ENCODE measurements at regions of chr2 and their contacts with region 1.

Region 1: GRCh38 chr2:104944495-104944894 is 90.6 kb downstream of the POU3F3 start:
- DNase-seq: no peak
- ATAC-seq: no peak
- H3K4me3 ChIP-seq: no peak overlapping the region
- H3K27ac ChIP-seq: no peak overlapping the region
- H3K4me1 ChIP-seq: no peaks in the 10 kb centered on the region
- H3K27me3 ChIP-seq: peaks cover 0 to 52% (median 22%) of the 10 kb centered on the region in 7 donors
- CTCF ChIP-seq: peak in 7 of 9 donors; percentile 14 to 50 (median 22)

Region 2: DNA sequence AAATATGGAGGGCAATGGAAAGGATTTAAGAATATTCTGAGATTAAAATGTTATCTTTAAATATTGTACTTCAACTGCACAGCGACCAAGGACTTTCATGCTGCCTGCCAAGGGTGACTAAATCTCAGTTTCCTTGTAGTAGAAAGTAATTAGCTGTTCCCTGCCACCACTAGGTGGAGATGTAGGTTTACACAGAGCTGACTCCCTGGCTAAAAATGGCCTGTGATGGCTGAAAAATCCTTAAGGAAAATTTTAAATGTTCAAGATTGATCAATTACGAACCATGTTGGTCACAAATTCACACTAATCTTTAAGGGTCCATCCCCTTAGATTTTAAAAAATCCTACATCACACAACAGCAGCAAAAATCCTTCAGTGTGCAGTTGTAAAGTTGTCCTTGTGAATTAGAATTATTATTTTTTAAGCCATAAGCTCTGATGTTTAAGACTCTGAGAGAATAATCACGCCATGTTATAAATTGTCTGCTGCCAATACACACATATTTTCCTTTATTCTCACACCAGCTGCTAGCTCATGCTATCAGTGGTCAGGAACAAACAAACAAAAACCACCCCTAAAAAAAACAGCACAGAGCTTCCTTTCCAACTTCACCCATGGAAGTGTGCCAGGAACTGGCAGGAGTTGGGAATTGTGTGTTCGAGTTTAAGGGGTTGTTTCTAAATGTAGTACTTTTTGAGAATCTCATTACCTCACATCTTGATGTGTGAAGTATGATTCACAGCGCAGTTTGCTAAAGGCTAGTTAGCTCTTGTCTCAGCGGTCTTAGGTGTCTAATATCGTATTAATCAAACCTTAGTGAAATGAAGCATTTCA is 1782.8 kb before region 1 on chr2:
- intact Hi-C with region 1: loop called in 1 of 10 experiments (anchors 10 kb)
- DNase-seq: peak in 1 of 2 donors; percentile 33
- ATAC-seq: peak in 3 of 8 donors; percentile 33 to 62 (median 60)
- H3K4me3 ChIP-seq: no peak overlapping the region
- H3K27ac ChIP-seq: no peak overlapping the region
- H3K4me1 ChIP-seq: no peaks in the 10 kb centered on the region
- H3K27me3 ChIP-seq: peaks cover 0 to 29% (median 0%) of the 10 kb centered on the region in 7 donors
- CTCF ChIP-seq: peak; percentile 40 to 74 (median 60)

Measured in heart right ventricle (tissue), 16 donors.